WTC11 (cell line): ENCODE measurements at regions of chr13 and their contacts with region 1.

Region 1: GRCh38 chr13:95191821-95192563 is 109.3 kb downstream of the ABCC4 start:
- DNase-seq: peak; percentile 93
- ATAC-seq: peak; percentile 98
- H3K4me3 Mint-ChIP-seq: no peak overlapping the region
- H3K27ac Mint-ChIP-seq: no peak overlapping the region
- H3K4me1 Mint-ChIP-seq: peaks cover 6% of the 10 kb centered on the region
- H3K27me3 Mint-ChIP-seq: no peaks in the 10 kb centered on the region
- CTCF ChIP-seq: peak; percentile 92

Region 2: GRCh38 chr13:94967183-94968039 is 224.6 kb before region 1 on chr13:
- CTCF ChIA-PET with region 1: interaction called, 11 read pairs
- POLR2A ChIA-PET with region 1: no interaction called
- DNase-seq: peak; percentile 57
- ATAC-seq: peak; percentile 68
- H3K4me3 Mint-ChIP-seq: peak overlapping the region; percentile 87
- H3K27ac Mint-ChIP-seq: no peak overlapping the region
- H3K4me1 Mint-ChIP-seq: peaks cover 51% of the 10 kb centered on the region
- H3K27me3 Mint-ChIP-seq: peaks cover 16% of the 10 kb centered on the region
- CTCF ChIP-seq: no peak

Region 3: DNA sequence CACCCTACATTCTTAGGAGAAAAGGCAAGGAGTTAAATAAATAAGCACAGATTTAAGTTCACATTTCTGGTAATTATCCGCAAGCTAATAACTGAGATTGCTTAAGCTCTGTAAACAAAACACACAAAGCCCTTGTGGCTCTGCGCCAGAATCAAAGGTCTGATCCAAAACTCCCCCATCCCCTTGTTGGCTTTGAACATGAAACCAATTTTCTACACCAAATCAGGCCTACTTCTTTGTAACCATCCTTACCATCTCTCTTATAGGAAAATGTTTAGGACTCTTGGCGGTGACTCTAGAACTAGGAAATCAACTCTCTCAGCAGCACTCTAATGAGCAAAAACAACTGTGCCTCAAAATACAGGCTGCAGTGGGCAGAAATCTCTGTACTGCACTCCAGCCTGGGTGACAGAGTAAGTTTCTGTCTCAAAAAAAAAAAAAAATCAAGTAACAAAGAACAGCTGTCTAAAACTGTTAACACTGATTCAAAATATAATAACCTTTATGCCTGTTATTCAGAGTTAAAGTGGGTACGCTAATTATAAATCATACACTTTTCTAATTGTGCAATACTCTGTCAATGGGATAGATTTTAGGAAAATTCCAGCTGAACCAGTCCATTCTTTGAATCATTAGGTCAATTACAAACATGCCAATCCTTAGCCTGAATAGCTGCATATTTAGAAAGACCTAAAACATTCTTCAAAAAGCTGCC is 83.5 kb after region 1 on chr13:
- CTCF ChIA-PET with region 1: interaction called, 12 read pairs
- POLR2A ChIA-PET with region 1: no interaction called
- DNase-seq: no peak
- ATAC-seq: no peak
- H3K4me3 Mint-ChIP-seq: no peak overlapping the region
- H3K27ac Mint-ChIP-seq: peak overlapping the region; percentile 40; the same call in 1 of the 2 replicates
- H3K4me1 Mint-ChIP-seq: peaks cover 14% of the 10 kb centered on the region
- H3K27me3 Mint-ChIP-seq: no peaks in the 10 kb centered on the region
- CTCF ChIP-seq: no peak

Region 4: DNA sequence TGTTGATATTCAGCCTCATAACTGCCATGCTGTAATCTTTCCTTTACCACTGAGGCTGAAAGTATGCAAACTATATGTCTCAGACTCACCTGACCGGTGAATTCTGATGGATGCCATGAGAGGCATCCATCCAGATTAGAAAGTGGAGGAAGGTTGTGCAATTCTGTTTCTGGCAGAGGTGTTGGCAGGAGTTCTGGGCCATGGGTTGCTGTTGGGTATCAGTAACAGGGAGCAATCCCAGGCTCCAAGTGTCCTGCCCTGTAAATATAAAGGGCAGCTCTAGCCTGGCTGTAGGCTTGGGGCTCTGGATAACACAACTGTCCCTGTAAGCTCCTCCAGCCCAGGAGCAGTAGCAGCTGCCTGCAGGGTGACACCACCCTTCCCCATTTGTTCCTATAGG is 186.6 kb after region 1 on chr13:
- CTCF ChIA-PET with region 1: interaction called, 75 read pairs
- POLR2A ChIA-PET with region 1: no interaction called
- DNase-seq: no peak
- ATAC-seq: no peak
- H3K4me3 Mint-ChIP-seq: no peak overlapping the region
- H3K27ac Mint-ChIP-seq: no peak overlapping the region
- H3K4me1 Mint-ChIP-seq: peaks cover 6% of the 10 kb centered on the region
- H3K27me3 Mint-ChIP-seq: no peaks in the 10 kb centered on the region
- CTCF ChIP-seq: no peak

Region 5: DNA sequence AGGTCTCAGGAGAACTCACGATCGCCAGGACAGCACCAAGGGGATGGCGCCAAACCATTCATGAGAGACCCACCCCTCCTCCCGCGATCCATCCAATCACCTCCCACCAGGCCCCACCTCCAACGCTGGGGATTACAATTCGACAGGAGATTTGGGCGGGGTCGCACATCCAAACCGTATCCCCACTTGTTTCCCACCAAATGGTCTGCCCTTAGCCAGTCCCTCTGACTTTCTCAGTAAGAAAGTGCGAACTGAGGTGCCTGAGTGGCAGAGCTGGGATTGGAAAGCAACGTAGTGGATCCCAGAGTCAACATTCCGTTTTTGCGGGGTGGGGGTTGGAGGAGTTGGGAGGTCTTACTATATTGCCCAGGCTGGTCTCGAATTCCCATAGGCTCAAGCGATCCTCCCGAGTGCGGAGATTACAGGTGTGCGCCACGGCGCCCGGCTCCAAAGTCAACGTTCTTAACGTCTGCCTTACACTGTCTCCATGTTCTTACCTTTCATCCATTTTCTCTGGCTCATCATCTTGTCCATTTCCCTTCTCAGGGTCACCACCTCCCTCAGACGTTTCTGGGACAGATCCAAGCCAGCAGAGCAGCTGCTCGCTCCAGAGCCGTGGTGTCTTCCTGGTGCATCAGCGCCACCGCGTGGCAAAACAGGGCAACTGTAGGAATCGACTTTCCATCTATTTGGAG is 212.0 kb after region 1 on chr13:
- CTCF ChIA-PET with region 1: interaction called, 388 read pairs
- POLR2A ChIA-PET with region 1: interaction called, 7 read pairs
- DNase-seq: peak; percentile 90
- ATAC-seq: peak; percentile 91
- H3K4me3 Mint-ChIP-seq: peak overlapping the region; percentile 74
- H3K27ac Mint-ChIP-seq: peak overlapping the region; percentile 43
- H3K4me1 Mint-ChIP-seq: peaks cover 5% of the 10 kb centered on the region
- H3K27me3 Mint-ChIP-seq: no peaks in the 10 kb centered on the region; the same call in 1 of the 2 replicates
- CTCF ChIP-seq: peak; percentile 85